Head of caudate nucleus (tissue), 42 donors: ENCODE measurements at regions of chr10 and their contacts with region 1.

Region 1: GRCh38 chr10:6920072-6921019 is 340.3 kb upstream of the PRKCQ start:
- DNase-seq: peak; percentile 74 to 94 (median 88)

Region 2: DNA sequence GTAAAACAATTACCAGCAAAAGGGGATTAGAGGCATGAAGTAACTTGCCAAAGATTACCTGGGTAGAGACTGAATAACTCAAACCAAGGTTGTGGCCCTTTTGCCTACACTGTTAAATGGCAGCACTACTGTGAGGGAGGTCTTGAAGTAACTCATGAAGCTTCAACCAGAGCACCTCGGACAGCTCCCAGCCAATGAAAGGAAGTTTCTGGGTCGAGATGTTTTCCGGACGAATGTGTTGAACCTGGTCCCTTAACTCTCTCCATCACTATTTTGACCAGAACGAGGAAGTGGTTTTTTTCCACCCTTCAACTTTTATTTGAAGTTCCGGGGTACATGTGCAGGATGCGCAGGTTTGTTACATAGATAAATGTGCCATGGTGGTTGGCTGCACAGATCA is 206.6 kb before region 1 on chr10:
- intact Hi-C with region 1: no loop called
- DNase-seq: no peak

Region 3: DNA sequence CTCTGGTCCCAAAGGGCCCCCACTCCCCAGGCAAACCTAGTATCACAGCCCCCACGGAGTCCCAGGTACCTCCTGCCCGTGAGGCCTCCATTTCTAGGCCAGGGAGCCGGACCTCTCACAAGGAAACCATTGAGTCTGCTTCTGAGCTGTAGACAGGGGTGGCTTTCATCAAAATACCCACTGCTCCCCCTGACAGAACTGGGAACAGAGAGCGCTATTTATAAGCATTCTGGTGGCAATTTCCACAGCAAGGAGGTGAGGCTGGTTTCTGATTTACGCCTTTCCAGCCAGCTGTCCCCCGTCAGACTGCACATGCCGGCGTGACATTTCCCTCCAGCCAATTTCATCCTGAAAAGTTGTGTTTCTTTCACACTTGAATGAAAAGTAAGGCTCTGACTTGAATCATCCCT is 67.2 kb after region 1 on chr10:
- intact Hi-C with region 1: loop called (anchors 10 kb)
- DNase-seq: peak; percentile 47 to 94 (median 82)

Region 4: GRCh38 chr10:7000061-7000460 is 79.7 kb after region 1 on chr10:
- intact Hi-C with region 1: no loop called
- DNase-seq: peak in 2 of 42 donors; percentile 20 to 42